ENCODE measurements at regions of chr1 and their contacts with region 1.

Region 1: DNA sequence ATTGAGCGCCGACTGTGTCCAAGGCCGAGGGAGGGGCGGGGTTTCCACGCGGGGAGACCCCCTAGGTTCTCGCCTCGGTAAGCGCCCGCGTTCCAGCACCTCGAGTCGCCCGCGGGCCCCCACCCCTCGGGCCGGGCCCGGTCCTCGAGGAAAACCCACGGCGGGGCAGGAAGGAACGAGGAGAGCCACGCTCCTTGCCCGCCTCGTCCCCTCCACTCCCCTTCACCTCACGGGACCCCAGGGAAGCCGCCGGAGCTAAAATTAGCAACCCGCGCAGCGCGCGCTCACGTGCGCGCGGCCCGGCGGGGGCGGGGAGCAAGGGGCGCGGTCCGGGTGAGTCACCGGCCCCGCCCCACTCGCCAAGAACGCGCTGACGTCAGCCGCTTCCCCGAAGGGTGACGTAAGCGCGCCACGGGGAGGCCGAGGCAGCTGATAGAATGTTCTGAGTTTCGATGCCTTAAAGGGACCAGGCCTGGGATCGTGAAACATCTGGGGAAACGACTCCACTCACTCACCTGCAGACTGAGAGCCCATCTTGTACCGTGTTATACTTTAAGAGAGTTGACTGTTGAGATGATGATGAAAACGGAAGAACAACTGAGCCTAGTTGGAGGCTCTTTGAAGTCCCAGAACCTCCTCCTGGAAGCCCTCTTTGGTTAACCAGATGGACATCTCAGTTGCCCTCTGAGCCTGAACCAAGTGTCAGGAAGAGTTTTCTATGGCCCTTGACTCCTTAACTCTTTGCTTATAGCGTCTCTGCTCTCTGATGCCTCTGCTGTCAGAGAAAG is 49.7 kb upstream of the ATF3 start:
- DNase-seq: peak; percentile 98
- H3K4me3 Mint-ChIP-seq: peak overlapping the region; percentile 70
- H3K27ac Mint-ChIP-seq: peak overlapping the region; percentile 99
- H3K4me1 Mint-ChIP-seq: peaks cover 16% of the 10 kb centered on the region
- H3K27me3 Mint-ChIP-seq: no peaks in the 10 kb centered on the region
- CTCF ChIP-seq: no peak

Region 2: GRCh38 chr1:212469701-212470458 is 89.0 kb before region 1 on chr1:
- CTCF ChIA-PET with region 1: interaction called, 3 read pairs
- POLR2A ChIA-PET with region 1: interaction called, 15 read pairs
- intact Hi-C with region 1: no loop called
- DNase-seq: peak; percentile 96
- H3K4me3 Mint-ChIP-seq: peak overlapping the region; percentile 49
- H3K27ac Mint-ChIP-seq: peak overlapping the region; percentile 90
- H3K4me1 Mint-ChIP-seq: peaks cover 10% of the 10 kb centered on the region
- H3K27me3 Mint-ChIP-seq: no peaks in the 10 kb centered on the region
- CTCF ChIP-seq: no peak

Region 3: GRCh38 chr1:212545941-212546635 is 12.8 kb before region 1 on chr1:
- CTCF ChIA-PET with region 1: interaction called, 3 read pairs
- POLR2A ChIA-PET with region 1: interaction called, 41 read pairs
- intact Hi-C with region 1: no loop called
- DNase-seq: peak; percentile 49
- H3K4me3 Mint-ChIP-seq: no peak overlapping the region
- H3K27ac Mint-ChIP-seq: peak overlapping the region; percentile 24
- H3K4me1 Mint-ChIP-seq: peaks cover 9% of the 10 kb centered on the region
- H3K27me3 Mint-ChIP-seq: no peaks in the 10 kb centered on the region
- CTCF ChIP-seq: no peak

Region 4: GRCh38 chr1:212586206-212587015 is 27.5 kb after region 1 on chr1:
- CTCF ChIA-PET with region 1: interaction called, 3 read pairs
- POLR2A ChIA-PET with region 1: interaction called, 11 read pairs
- intact Hi-C with region 1: no loop called
- DNase-seq: no peak
- H3K4me3 Mint-ChIP-seq: no peak overlapping the region
- H3K27ac Mint-ChIP-seq: no peak overlapping the region
- H3K4me1 Mint-ChIP-seq: peaks cover 6% of the 10 kb centered on the region
- H3K27me3 Mint-ChIP-seq: peaks cover 38% of the 10 kb centered on the region
- CTCF ChIP-seq: no peak

Region 5: GRCh38 chr1:212595787-212596714 is 37.2 kb after region 1 on chr1:
- CTCF ChIA-PET with region 1: interaction called, 4 read pairs
- POLR2A ChIA-PET with region 1: interaction called, 16 read pairs
- intact Hi-C with region 1: loop called (anchors 1 kb)
- DNase-seq: peak; percentile 97
- H3K4me3 Mint-ChIP-seq: peak overlapping the region; percentile 69
- H3K27ac Mint-ChIP-seq: peak overlapping the region; percentile 100
- H3K4me1 Mint-ChIP-seq: peaks cover 27% of the 10 kb centered on the region
- H3K27me3 Mint-ChIP-seq: peaks cover 30% of the 10 kb centered on the region
- CTCF ChIP-seq: peak; percentile 97

Region 6: DNA sequence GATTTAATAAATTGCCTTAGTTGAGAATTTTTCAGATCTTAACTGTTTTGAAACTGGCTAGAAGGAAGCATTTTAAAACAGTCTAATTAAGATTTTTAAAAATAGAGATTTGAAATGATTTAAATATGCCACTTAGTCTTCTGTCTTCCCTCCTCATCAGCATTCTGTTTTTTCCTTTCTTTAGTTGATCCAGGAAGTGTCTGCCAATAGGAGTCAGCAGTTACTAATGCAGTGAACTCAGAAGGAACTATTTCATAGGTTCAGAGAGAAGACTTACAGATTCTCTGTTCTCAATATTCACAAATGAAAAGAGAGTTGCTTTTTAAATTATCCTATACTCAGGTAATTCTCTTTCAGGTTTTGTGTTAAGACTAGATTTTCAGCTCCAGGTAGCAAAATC is 576.7 kb after region 1 on chr1:
- CTCF ChIA-PET with region 1: no interaction called
- POLR2A ChIA-PET with region 1: no interaction called
- intact Hi-C with region 1: no loop called
- DNase-seq: no peak
- H3K4me3 Mint-ChIP-seq: no peak overlapping the region
- H3K27ac Mint-ChIP-seq: no peak overlapping the region
- H3K4me1 Mint-ChIP-seq: no peaks in the 10 kb centered on the region
- H3K27me3 Mint-ChIP-seq: no peaks in the 10 kb centered on the region
- CTCF ChIP-seq: no peak

Region 7: GRCh38 chr1:213649373-213649772 is 1090.5 kb after region 1 on chr1:
- CTCF ChIA-PET with region 1: no interaction called
- POLR2A ChIA-PET with region 1: no interaction called
- intact Hi-C with region 1: no loop called
- DNase-seq: no peak
- H3K4me3 Mint-ChIP-seq: no peak overlapping the region
- H3K27ac Mint-ChIP-seq: no peak overlapping the region
- H3K4me1 Mint-ChIP-seq: no peaks in the 10 kb centered on the region
- H3K27me3 Mint-ChIP-seq: peaks cover 43% of the 10 kb centered on the region
- CTCF ChIP-seq: no peak